Left colon (tissue), 2 donors: ENCODE measurements at regions of chr4 and their contacts with region 1.

Region 1: GRCh38 chr4:22897520-22898108 is 204.9 kb downstream of the GBA3 start:
- DNase-seq: no peak
- ATAC-seq: peak; percentile 57

Region 2: DNA sequence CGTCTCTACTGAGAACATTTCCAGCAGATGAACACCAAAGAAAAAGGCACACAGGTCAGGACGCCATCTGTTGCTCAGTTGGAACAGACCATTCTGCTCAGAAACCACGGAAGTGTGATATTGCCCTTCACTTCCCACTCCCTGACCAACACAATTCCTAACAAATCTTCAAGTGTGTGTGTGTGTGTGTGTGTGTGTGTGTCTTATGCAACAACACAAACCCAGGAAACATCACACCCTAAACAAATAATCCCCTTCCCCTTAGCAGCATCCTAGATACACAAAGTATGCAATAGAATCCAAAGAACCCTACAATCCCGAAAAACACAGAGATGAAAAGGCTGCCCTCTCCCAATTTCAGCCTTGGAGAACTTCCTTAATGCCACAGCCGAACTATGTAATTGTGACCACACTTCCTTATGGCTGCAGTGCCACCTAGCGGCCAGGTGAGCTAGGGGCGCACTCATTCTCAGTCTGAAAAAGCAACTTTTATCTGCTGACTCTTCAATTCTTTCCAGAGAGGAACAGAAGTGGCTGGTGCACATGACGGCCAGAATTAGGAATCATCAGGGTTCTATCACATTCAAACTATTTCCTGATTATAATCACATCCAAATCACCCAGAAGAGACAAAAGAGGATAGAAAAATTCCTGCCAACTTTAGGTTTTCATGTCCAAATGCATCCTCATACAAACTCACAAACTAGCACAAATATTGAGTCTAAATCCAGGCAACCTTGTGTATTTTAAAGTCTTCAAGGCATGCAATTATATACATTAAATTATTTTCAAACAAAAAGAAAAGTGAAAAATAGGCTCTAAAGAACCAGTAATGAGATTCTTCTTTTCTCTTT is 1521.8 kb after region 1 on chr4:
- intact Hi-C with region 1: loop called in 1 of 2 experiments (anchors 10 kb)
- DNase-seq: peak; percentile 51 to 86
- ATAC-seq: peak; percentile 97